OCI-LY7 (cell line): ENCODE measurements at regions of chr7 and their contacts with region 1.

Region 1: DNA sequence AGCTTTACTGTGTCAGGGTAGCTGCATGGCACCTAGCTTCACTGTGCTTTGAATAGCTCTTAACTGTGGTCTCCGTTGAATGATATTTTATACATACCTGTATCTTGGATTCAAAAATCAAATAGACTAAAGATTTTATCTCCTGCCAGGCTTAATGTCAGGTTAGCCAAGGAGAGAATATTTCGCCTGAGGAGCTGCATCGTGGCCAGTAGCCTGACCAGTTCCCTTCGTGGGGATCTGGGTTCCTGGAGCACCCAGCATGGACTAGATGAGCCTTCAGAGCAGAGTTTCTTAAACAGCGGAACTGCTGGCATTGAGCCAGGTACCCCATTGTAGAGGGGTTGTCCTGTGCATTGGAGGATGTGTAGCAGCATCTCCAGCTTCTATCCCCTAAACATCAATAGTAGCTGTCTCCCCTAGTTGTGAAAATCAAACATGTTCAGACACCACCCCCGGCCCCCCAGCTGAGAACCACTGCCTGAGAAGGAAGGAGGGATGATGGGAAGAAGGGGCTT is 36.1 kb downstream of the CDHR3 start:
- DNase-seq: no peak
- H3K4me3 ChIP-seq: no peak overlapping the region
- H3K27ac ChIP-seq: no peak overlapping the region
- H3K4me1 ChIP-seq: no peaks in the 10 kb centered on the region
- CTCF ChIP-seq: no peak

Region 2: GRCh38 chr7:104133238-104133931 is 1865.8 kb before region 1 on chr7:
- CTCF ChIA-PET with region 1: interaction called, 23 read pairs
- POLR2A ChIA-PET with region 1: no interaction called
- intact Hi-C with region 1: no loop called
- DNase-seq: no peak
- H3K4me3 ChIP-seq: no peak overlapping the region
- H3K27ac ChIP-seq: no peak overlapping the region
- H3K4me1 ChIP-seq: no peaks in the 10 kb centered on the region
- CTCF ChIP-seq: no peak

Region 3: DNA sequence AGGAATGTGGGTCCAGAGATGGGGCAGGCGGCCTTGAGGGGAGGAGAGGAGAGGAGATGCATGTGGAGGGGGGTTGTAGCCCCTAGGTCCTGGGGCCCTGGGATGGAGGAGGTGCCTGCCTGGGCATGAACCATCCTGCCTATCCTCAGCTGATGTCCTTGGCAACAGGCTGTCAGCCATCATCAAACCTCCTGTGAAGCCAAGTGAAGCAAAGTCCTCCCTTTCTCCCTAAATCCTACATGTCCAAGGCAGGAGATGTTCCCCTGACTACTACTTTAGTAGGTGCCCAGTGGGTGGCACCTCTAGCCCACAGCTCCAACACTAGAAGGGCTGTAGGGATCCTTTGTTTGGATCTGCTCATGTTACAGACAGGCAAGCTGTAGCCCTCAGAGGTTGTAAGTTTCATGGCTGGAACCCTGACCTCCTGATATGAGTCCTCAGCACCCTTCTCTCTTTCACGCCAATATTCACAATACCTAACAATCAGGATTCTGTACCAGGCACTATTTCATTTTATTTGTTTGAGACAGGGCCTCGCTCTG is 179.5 kb after region 1 on chr7:
- CTCF ChIA-PET with region 1: no interaction called
- POLR2A ChIA-PET with region 1: no interaction called
- intact Hi-C with region 1: no loop called
- DNase-seq: peak; percentile 33
- H3K4me3 ChIP-seq: no peak overlapping the region
- H3K27ac ChIP-seq: no peak overlapping the region
- H3K4me1 ChIP-seq: peaks cover 49% of the 10 kb centered on the region
- CTCF ChIP-seq: no peak